ENCODE measurements at regions of chr11 and their contacts with region 1.

Region 1: DNA sequence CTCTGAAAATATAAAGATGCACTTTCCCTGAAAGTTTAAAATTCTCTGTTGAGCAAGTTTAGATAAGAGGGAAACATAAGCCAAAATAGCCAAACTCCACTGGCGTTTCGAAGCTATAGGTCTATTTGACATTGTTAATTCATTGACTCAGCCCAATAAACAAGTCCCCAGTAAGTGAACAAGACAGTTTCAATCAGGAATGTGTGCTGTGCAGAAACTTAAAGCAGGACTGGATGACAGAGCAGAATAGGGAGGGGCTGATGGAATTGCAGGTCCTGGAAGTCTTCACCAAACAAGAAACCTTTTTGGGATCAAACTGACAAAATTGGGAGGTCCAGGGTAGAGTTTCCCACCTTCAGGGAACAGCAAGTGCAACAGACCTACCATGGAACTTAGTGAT is 8.9 kb upstream of the KDM4E start:
- DNase-seq: no peak
- H3K4me3 Mint-ChIP-seq: no peak overlapping the region
- H3K27ac Mint-ChIP-seq: no peak overlapping the region
- H3K4me1 Mint-ChIP-seq: no peaks in the 10 kb centered on the region
- H3K27me3 Mint-ChIP-seq: peaks cover 9% of the 10 kb centered on the region

Region 2: GRCh38 chr11:93530468-93530826 is 1485.7 kb before region 1 on chr11:
- CTCF ChIA-PET with region 1: no interaction called
- POLR2A ChIA-PET with region 1: interaction called, 13 read pairs
- DNase-seq: no peak
- H3K4me3 Mint-ChIP-seq: peak overlapping the region; percentile 57
- H3K27ac Mint-ChIP-seq: peak overlapping the region; percentile 77
- H3K4me1 Mint-ChIP-seq: peaks cover 85% of the 10 kb centered on the region
- H3K27me3 Mint-ChIP-seq: no peaks in the 10 kb centered on the region

Measured in activated CD4-positive, alpha-beta T cell treated with anti-CD3 and anti-CD28 coated beads, Interleukin-2, amount 10 ng/mL, durations not matched to agents 7 days and 5 days (primary cell).